ENCODE measurements at regions of chr16 and their contacts with region 1.

Region 1: GRCh38 chr16:72241930-72242329 is 70.0 kb upstream of the PMFBP1 start:
- DNase-seq: peak; percentile 21
- ATAC-seq: peak in 1 of 2 donors; percentile 87

Region 2: DNA sequence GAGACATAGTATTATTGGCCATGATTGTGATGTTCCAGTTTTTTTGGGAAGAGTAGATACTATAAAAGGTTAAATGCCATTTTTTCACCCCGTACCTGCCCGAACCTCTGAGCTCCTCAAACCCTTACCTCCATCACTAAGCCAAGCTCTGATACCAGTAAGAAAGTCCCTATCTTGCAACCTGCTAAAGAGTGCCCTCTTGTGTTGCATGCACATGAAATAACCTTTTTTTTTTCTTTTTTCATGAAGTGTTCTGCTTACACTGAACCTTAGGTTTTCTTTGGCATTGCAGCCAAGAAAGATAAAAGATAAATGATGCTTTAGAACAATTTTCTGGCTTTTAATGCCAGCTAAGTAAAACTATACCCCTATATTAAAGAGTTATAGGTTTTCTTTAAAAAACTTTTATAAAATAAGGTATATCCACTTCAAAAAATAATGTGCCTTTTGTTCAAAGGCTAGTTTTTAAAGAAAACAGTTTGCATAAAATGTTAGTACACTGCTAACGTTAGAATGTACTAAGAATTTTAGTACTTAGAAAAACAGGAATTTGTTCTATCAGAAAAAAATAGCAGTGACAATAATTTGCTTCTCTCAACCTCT is 225.3 kb after region 1 on chr16:
- intact Hi-C with region 1: loop called in 1 of 2 experiments (anchors 10 kb)
- DNase-seq: no peak
- ATAC-seq: peak in 1 of 2 donors; percentile 45

Measured in left cardiac atrium (tissue), 4 donors.